ENCODE measurements at regions of chr9 and their contacts with region 1.

Region 1: GRCh38 chr9:135907431-135908092 is at the start of gene CAMSAP1:
- DNase-seq: peak; percentile 90 to 98 (median 96)
- ATAC-seq: peak; percentile 87
- H3K4me3 ChIP-seq: peak within 1 kb of the TSS; percentile 67 to 78
- H3K4me3 Mint-ChIP-seq: peak within 1 kb of the TSS; percentile 88
- H3K27ac ChIP-seq: peak within 1 kb of the TSS; percentile 21 to 71
- H3K27ac Mint-ChIP-seq: peak within 1 kb of the TSS; percentile 86
- H3K4me1 ChIP-seq: peaks cover 27% of the 10 kb centered on the region
- H3K4me1 Mint-ChIP-seq: peaks cover 48% of the 10 kb centered on the region
- H3K27me3 ChIP-seq: no peaks in the 10 kb centered on the region
- H3K27me3 Mint-ChIP-seq: no peaks in the 10 kb centered on the region
- CTCF ChIP-seq: no peak
- total RNA-seq, gene CAMSAP1: 16.4 to 20.8 TPM

Region 2: GRCh38 chr9:134024828-134025605 is 1882.5 kb before region 1 on chr9 and contains the start of gene BRD3OS:
- CTCF ChIA-PET with region 1: no interaction called
- POLR2A ChIA-PET with region 1: no interaction called
- intact Hi-C with region 1: loop called in 1 of 2 experiments (anchors 5 kb)
- DNase-seq: peak; percentile 81 to 98 (median 90)
- ATAC-seq: peak; percentile 96
- H3K4me3 ChIP-seq: peak within 1 kb of the TSS; percentile 71 to 92
- H3K4me3 Mint-ChIP-seq: peak within 1 kb of the TSS; percentile 80
- H3K27ac ChIP-seq: peak within 1 kb of the TSS; percentile 56 to 65
- H3K27ac Mint-ChIP-seq: peak within 1 kb of the TSS; percentile 45
- H3K4me1 ChIP-seq: peaks cover 11% of the 10 kb centered on the region
- H3K4me1 Mint-ChIP-seq: peaks cover 11% of the 10 kb centered on the region
- H3K27me3 ChIP-seq: no peaks in the 10 kb centered on the region
- H3K27me3 Mint-ChIP-seq: no peaks in the 10 kb centered on the region
- CTCF ChIP-seq: no peak
- total RNA-seq, gene BRD3OS: 3.3 to 4.2 TPM

Region 3: DNA sequence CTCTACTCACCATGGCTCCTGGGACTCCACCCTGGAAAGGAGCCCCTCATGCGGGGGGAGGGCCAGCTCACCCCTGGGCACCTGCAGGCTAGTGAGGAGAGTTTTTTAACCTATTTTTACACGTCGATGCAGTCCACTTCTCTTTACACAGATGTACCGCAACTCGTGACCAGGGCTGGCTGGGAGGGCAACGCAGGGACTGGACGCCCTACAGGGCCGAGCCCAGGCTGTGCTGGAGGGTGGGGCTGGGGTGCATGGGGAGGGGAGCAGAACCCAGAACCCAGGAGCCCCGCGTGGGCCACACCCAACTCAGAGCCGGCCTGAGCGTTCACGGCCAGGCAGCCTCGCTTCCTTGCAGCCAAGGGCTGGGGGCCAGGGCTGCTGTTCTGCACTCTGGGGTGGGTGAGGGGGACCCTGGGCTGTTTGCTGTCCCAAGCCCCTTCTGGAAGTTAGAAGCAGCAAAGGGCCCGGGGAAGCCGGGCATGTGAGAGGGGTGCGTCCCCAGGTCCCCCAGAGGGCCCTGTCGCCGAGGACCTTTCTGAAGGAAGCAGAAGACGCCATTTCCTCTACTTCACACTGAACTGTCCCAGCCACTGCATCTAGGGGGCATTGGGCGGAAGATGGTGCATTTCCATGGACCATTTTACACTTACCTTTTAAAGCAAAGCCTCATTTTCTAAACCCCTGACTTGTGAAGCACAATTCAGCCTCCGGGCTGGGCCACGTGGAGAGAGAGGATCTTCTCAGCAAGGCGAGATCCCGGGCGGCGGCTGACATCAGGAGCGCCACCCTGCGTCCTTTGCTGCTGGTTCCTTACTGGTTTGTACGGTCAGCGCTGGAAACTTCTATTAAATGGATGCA is 115.1 kb before region 1 on chr9:
- CTCF ChIA-PET with region 1: no interaction called
- POLR2A ChIA-PET with region 1: no interaction called
- intact Hi-C with region 1: no loop called
- DNase-seq: no peak
- ATAC-seq: no peak
- H3K4me3 ChIP-seq: no peak overlapping the region
- H3K4me3 Mint-ChIP-seq: no peak overlapping the region
- H3K27ac ChIP-seq: no peak overlapping the region
- H3K27ac Mint-ChIP-seq: no peak overlapping the region
- H3K4me1 ChIP-seq: no peaks in the 10 kb centered on the region
- H3K4me1 Mint-ChIP-seq: no peaks in the 10 kb centered on the region
- H3K27me3 ChIP-seq: no peaks in the 10 kb centered on the region
- H3K27me3 Mint-ChIP-seq: no peaks in the 10 kb centered on the region
- CTCF ChIP-seq: no peak

Region 4: GRCh38 chr9:135840539-135840938 is 67.0 kb before region 1 on chr9:
- CTCF ChIA-PET with region 1: no interaction called
- POLR2A ChIA-PET with region 1: no interaction called
- intact Hi-C with region 1: no loop called
- DNase-seq: no peak
- ATAC-seq: no peak
- H3K4me3 ChIP-seq: no peak overlapping the region
- H3K4me3 Mint-ChIP-seq: no peak overlapping the region
- H3K27ac ChIP-seq: no peak overlapping the region
- H3K27ac Mint-ChIP-seq: no peak overlapping the region
- H3K4me1 ChIP-seq: no peaks in the 10 kb centered on the region
- H3K4me1 Mint-ChIP-seq: peaks cover 3% of the 10 kb centered on the region
- H3K27me3 ChIP-seq: no peaks in the 10 kb centered on the region
- H3K27me3 Mint-ChIP-seq: no peaks in the 10 kb centered on the region
- CTCF ChIP-seq: no peak

Region 5: DNA sequence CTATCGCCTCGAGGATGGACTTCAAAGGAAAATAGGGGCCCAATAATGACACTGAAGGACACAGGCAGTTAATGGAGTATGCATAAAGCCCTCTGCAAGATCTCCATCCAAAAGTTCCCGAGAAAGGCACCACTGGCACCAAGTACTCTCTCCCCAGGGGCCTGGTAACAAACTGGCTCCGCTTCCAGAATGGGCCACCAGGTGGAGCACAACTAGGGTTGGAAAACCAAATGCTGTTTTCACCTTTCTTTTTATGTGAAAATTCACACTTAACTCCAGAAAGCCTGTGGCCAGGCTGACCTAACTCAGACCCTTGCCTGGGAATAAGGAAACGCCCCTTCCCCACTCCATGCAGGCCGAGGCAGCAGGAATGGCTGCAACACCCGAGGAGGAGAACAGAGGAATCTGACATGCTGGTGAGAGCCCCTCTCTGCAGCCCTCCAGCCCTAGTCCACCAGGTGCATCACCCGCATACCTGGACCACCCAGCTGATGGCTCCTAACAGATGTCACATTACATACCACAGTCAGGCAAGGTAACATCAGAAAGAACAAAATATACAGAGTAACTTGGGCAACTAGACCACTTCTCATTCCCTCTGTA is 43.0 kb before region 1 on chr9:
- CTCF ChIA-PET with region 1: no interaction called
- POLR2A ChIA-PET with region 1: no interaction called
- intact Hi-C with region 1: loop called (anchors 1 kb)
- DNase-seq: peak; percentile 52 to 82 (median 65)
- ATAC-seq: peak; percentile 66
- H3K4me3 ChIP-seq: no peak overlapping the region
- H3K4me3 Mint-ChIP-seq: no peak overlapping the region
- H3K27ac ChIP-seq: no peak overlapping the region
- H3K27ac Mint-ChIP-seq: peak overlapping the region; percentile 32
- H3K4me1 ChIP-seq: no peaks in the 10 kb centered on the region
- H3K4me1 Mint-ChIP-seq: peaks cover 17% of the 10 kb centered on the region
- H3K27me3 ChIP-seq: no peaks in the 10 kb centered on the region
- H3K27me3 Mint-ChIP-seq: no peaks in the 10 kb centered on the region
- CTCF ChIP-seq: peak; percentile 87

Region 6: DNA sequence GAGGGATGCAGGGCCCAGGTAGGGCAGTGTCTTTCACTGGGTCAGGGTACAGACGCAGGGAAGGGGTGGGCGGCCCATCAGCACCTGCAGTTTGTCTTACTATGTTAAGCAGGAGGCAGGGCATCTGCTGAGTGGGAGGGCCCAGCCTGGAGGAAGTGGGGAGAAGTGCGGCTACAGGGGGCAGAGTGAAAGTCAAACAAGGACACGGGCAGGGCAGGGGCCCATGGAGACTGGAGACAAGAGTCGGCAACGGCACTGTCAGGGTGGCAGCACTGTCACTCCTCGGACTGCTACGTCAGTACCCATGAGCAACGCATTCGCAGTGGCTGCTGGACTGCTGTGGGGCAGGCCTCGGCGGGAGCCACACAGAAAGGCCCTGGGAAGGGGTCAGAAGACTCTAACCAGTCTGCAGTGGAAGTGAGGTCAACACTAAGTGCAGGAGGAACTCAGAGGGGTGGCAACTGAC is 19.9 kb before region 1 on chr9:
- CTCF ChIA-PET with region 1: no interaction called
- POLR2A ChIA-PET with region 1: no interaction called
- intact Hi-C with region 1: loop called in 1 of 2 experiments (anchors 1 kb)
- DNase-seq: peak; percentile 14 to 86 (median 65)
- ATAC-seq: peak; percentile 98
- H3K4me3 ChIP-seq: peak overlapping the region; percentile 25 to 50
- H3K4me3 Mint-ChIP-seq: peak overlapping the region; percentile 77
- H3K27ac ChIP-seq: peak overlapping the region; percentile 73 to 75
- H3K27ac Mint-ChIP-seq: peak overlapping the region; percentile 96
- H3K4me1 ChIP-seq: peaks cover 39% of the 10 kb centered on the region
- H3K4me1 Mint-ChIP-seq: peaks cover 80% of the 10 kb centered on the region
- H3K27me3 ChIP-seq: no peaks in the 10 kb centered on the region
- H3K27me3 Mint-ChIP-seq: no peaks in the 10 kb centered on the region
- CTCF ChIP-seq: no peak

Region 7: DNA sequence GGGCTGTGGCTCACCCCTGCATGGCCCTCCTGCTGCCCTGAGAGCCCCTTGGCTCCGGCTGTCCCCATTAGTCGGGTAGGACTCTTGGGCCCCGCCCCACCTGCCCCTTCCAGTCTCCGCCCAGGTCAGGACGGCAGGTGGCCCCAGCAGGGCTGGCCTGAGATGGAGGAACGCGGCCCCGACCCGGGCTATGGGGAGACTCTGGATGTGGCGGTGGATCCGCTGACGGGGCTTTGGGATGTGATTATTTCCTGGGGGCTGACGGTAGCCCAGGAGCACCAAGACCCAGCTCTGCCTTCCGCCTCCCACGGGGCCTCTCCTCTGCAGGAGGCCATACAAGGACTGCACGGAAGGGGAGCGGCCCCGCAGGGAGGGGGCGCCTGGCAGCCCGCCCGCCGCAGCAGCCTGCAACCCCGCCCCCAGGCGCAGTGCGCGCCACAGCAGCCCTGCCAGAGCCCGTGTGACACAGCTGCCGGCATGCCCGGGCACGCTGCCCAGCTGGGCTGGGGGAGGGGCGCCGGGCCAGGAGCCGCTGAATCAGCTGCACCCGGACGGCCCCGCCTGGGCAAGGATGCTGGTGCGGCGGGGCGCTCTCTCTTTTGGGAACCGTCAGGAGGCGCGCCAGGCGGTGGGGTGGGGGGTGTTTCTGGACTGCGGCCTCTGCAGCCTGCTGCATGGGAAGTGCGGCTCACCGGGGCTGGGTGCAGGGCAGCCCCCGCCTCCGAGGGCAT is 202.0 kb after region 1 on chr9:
- CTCF ChIA-PET with region 1: no interaction called
- POLR2A ChIA-PET with region 1: no interaction called
- intact Hi-C with region 1: loop called in 1 of 2 experiments (anchors 5 kb)
- DNase-seq: peak; percentile 77 to 95 (median 92)
- ATAC-seq: peak; percentile 91
- H3K4me3 ChIP-seq: peak overlapping the region; percentile 58 to 65
- H3K4me3 Mint-ChIP-seq: peak overlapping the region; percentile 83
- H3K27ac ChIP-seq: peak overlapping the region; percentile 28 to 84
- H3K27ac Mint-ChIP-seq: peak overlapping the region; percentile 84
- H3K4me1 ChIP-seq: peaks cover 93% of the 10 kb centered on the region
- H3K4me1 Mint-ChIP-seq: peaks cover 73% of the 10 kb centered on the region
- H3K27me3 ChIP-seq: no peaks in the 10 kb centered on the region
- H3K27me3 Mint-ChIP-seq: no peaks in the 10 kb centered on the region
- CTCF ChIP-seq: no peak

Measured in CD8-positive, alpha-beta T cell (primary cell).